ENCODE measurements at regions of chr12 and their contacts with region 1.

Region 1: GRCh38 chr12:56117778-56118687 is at the start of gene ZC3H10:
- DNase-seq: peak; percentile 99
- ATAC-seq: peak; percentile 77
- H3K4me3 Mint-ChIP-seq: peak within 1 kb of the TSS; percentile 97
- H3K27ac Mint-ChIP-seq: peak within 1 kb of the TSS; percentile 100
- H3K4me1 Mint-ChIP-seq: peaks cover 24% of the 10 kb centered on the region
- H3K27me3 Mint-ChIP-seq: no peaks in the 10 kb centered on the region
- total RNA-seq, gene ZC3H10: 6.4 to 6.5 TPM

Region 2: DNA sequence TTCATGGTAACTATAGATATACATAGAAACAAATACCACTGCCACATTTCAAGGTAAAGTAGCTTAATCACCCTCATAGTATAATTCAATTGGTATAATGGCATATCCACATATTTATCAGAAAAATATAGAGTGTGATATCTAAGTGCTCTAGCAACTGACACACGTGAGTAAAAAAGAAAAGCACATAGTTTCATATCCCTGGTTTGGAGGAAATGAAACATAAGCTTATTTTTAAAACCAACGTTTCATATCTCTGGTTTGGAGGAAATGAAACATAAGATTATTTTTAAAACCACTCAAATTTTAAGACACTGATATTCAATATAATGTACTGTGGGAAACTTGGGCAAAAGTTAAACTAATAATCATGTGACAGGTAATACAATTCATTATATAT is 650.2 kb before region 1 on chr12:
- CTCF ChIA-PET with region 1: no interaction called
- POLR2A ChIA-PET with region 1: no interaction called
- intact Hi-C with region 1: no loop called
- DNase-seq: no peak
- ATAC-seq: no peak
- H3K4me3 Mint-ChIP-seq: no peak overlapping the region
- H3K27ac Mint-ChIP-seq: no peak overlapping the region
- H3K4me1 Mint-ChIP-seq: no peaks in the 10 kb centered on the region
- H3K27me3 Mint-ChIP-seq: peaks cover 13% of the 10 kb centered on the region

Region 3: DNA sequence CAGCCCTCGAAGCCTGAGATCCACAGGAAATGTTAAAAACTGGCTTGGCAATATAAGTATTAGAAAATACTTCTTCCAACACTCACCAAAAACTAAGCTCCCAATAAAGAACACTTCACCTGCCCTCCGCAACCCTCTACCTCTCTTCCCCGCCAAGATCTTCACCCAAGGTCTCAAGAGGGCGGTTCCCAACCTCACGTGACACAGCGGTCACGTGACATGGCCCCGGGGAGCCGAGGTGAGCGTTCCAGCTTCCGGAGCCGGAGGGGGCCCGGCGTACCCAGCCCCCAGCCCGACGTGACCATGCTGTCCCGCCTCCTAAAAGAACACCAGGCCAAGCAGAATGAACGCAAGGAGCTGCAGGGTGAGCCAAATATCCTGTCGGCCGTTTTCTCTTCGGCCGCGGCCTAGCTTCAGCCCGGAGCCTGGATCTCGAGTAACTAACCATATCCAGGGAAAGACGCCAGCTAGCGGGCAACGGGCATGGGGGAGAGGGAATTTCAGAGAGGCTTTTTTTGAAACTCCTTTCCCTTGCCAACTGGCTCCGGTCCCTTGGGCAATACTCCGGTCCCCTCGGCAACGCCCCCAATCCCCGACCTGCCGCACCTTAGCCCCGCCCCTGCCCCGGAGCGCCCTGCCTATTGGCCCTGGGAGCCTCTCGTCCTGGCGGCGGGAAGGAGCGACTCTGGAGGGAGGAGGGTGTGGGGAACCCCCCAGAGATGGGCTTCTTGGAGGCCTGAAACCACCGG is 402.0 kb before region 1 on chr12 and contains the start of gene BLOC1S1:
- CTCF ChIA-PET with region 1: no interaction called
- POLR2A ChIA-PET with region 1: no interaction called
- intact Hi-C with region 1: loop called in 1 of 2 experiments (anchors 1 kb)
- DNase-seq: peak; percentile 97
- ATAC-seq: peak; percentile 94
- H3K4me3 Mint-ChIP-seq: peak within 1 kb of the TSS; percentile 86
- H3K27ac Mint-ChIP-seq: peak within 1 kb of the TSS; percentile 89
- H3K4me1 Mint-ChIP-seq: peaks cover 30% of the 10 kb centered on the region
- H3K27me3 Mint-ChIP-seq: peaks cover 2% of the 10 kb centered on the region
- total RNA-seq, gene BLOC1S1: 107 to 115 TPM

Region 4: DNA sequence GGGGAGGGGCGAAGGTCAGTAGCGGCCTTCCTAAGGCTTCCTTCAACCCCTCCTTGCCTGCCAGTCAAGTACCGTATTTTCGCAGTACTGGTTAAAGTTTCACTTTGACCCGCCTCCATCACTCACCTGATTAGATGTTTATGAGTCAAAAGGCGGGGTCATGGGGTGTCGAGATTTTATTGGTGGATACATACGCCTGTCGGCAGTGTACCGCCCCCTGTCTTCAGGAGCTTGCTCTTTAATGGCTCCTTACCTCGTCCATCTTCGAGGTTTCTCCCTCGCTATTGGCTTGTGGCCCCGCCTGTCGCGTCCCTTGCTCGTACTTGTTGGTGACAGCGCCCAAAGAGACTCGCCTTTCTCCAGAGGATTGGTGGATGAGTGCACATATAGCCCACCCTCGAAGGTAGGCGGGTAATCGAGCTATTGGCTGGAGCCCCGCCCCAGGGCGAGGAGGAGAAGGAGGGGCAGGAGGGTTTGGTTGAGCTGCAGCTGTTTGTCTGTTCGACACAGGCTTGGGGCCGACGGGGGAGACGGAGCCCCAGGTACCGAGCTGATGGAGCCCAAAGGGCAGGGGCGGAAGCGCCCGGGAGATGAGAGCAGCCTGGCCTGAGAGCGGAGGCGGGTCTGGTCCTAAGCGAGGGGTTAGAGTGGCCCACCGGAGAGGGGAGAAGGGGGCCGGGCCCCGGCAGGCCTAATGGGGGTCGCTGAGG is 144.3 kb before region 1 on chr12 and contains the start of gene RAB5B:
- CTCF ChIA-PET with region 1: interaction called, 5 read pairs
- POLR2A ChIA-PET with region 1: interaction called, 14 read pairs
- intact Hi-C with region 1: loop called in 1 of 2 experiments (anchors 1 kb)
- DNase-seq: peak; percentile 98
- ATAC-seq: peak; percentile 93
- H3K4me3 Mint-ChIP-seq: no peak within 1 kb of the TSS
- H3K27ac Mint-ChIP-seq: no peak within 1 kb of the TSS
- H3K4me1 Mint-ChIP-seq: peaks cover 28% of the 10 kb centered on the region
- H3K27me3 Mint-ChIP-seq: no peaks in the 10 kb centered on the region
- total RNA-seq, gene RAB5B: 33.2 to 35.1 TPM

Region 5: GRCh38 chr12:56152318-56153033 is 34.4 kb after region 1 on chr12 and contains the start of gene MYL6B:
- CTCF ChIA-PET with region 1: interaction called, 12 read pairs
- POLR2A ChIA-PET with region 1: interaction called, 5 read pairs
- intact Hi-C with region 1: loop called in 1 of 2 experiments (anchors 1 kb)
- DNase-seq: peak; percentile 98
- ATAC-seq: peak; percentile 92
- H3K4me3 Mint-ChIP-seq: peak within 1 kb of the TSS; percentile 88
- H3K27ac Mint-ChIP-seq: peak within 1 kb of the TSS; percentile 99
- H3K4me1 Mint-ChIP-seq: peaks cover 29% of the 10 kb centered on the region
- H3K27me3 Mint-ChIP-seq: no peaks in the 10 kb centered on the region
- total RNA-seq, gene MYL6B: 76.3 to 79.3 TPM

Region 6: DNA sequence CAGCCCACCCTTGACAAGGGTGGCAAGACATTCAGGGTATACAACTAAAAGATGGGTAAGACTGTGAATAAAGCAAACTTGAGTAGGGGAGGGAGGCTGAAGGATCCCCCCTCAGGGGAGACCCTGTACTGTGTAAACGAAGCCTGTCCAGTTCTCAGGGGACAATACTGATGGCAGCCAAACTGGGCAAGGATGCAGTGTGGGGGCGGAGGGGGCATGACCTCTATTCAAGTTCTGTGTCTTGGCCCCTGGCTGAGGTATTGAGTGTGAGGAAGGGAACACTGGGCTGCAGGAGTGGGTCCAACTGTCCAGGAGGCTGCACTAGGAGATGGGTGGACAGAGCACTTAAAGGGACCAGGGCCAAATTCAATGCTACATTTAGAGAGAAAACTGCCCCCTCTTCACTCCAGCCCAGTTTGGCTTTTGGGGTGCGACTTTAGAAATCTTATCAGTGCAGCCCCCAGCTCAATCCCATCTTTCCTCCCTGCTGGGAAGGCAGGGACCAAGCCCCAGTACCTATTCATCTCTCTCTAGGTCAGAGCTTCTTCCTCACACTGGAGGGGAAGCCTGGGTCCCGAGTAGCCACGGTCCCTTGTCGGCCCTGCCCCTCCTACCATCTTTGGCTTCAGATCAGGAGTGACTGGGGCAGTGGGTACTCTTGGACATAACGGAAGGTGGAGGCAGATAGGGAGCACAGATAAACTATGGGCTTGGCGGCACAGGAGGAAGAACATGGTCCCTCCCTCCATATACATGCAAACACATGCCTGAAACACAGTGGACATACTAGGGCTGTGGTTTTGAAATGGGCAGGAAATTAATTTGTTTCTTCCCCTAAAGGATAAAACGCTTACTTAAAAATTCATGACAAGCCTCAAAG is 123.6 kb after region 1 on chr12:
- CTCF ChIA-PET with region 1: no interaction called
- POLR2A ChIA-PET with region 1: no interaction called
- intact Hi-C with region 1: no loop called
- DNase-seq: no peak
- ATAC-seq: no peak
- H3K4me3 Mint-ChIP-seq: no peak overlapping the region
- H3K27ac Mint-ChIP-seq: peak overlapping the region; percentile 4
- H3K4me1 Mint-ChIP-seq: no peaks in the 10 kb centered on the region
- H3K27me3 Mint-ChIP-seq: no peaks in the 10 kb centered on the region

Region 7: GRCh38 chr12:56266693-56267442 is 148.8 kb after region 1 on chr12 and contains the start of gene COQ10A:
- CTCF ChIA-PET with region 1: interaction called, 6 read pairs
- POLR2A ChIA-PET with region 1: no interaction called
- intact Hi-C with region 1: loop called in 1 of 2 experiments (anchors 2 kb)
- DNase-seq: peak; percentile 90
- ATAC-seq: peak; percentile 90
- H3K4me3 Mint-ChIP-seq: peak within 1 kb of the TSS; percentile 89
- H3K27ac Mint-ChIP-seq: peak within 1 kb of the TSS; percentile 89
- H3K4me1 Mint-ChIP-seq: peaks cover 9% of the 10 kb centered on the region
- H3K27me3 Mint-ChIP-seq: no peaks in the 10 kb centered on the region
- total RNA-seq, gene COQ10A: 5.2 to 7.5 TPM

Region 8: DNA sequence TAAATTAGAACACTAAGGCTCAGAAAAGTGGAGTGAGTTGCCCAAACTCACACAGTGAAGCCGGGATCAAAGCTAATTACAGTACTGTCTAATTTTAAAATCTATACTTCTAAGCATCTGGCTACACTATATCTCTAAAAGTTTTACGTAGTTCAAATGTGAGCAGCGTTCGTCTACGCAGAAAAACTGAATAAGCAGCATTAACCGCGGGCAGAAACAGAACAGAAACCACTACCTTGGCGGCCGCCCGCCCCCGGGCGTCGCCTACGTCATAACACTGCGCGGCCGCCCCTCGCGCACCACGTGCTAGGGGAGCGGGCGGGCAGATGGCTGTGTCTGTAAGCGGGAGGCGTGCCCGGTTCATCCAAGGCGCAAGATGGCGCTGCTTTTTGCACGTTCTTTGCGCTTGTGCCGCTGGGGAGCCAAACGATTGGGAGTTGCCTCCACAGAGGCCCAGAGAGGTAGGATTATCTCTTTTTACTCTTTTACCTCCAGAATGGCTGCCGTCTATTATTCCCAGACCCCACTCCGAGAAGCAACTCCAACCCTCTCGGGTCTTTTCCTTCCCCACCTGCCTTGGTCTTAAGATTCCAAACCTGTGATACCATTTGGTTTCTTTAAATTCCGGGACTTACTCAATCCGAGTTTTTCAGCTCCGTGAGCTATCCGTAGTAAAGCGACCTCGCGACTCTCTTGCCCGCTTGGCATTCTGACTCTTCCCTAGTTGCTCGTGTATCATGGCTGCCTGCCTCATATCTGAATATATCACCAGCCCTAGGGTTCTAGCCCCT is 350.4 kb after region 1 on chr12 and contains the start of gene SPRYD4:
- CTCF ChIA-PET with region 1: interaction called, 5 read pairs
- POLR2A ChIA-PET with region 1: no interaction called
- intact Hi-C with region 1: loop called in 1 of 2 experiments (anchors 1 kb)
- DNase-seq: peak; percentile 96
- ATAC-seq: peak; percentile 90
- H3K4me3 Mint-ChIP-seq: peak within 1 kb of the TSS; percentile 91
- H3K27ac Mint-ChIP-seq: peak within 1 kb of the TSS; percentile 99
- H3K4me1 Mint-ChIP-seq: peaks cover 40% of the 10 kb centered on the region
- H3K27me3 Mint-ChIP-seq: no peaks in the 10 kb centered on the region
- total RNA-seq, gene SPRYD4: 3.1 TPM

Region 9: DNA sequence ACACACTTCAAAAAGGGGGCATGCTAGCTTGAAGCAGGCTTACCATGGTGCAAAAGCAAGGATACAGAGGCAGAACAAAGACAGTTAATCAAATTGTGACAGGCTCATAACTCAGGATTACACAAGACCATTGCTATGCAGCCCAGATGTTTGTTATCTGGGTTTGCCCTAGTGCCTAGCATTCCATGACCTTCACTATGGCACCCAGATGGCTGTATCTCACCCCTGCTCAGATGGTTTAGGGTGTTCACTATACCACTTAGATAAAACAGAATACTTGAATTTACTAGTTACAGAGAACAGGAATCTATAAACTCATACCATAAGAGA is 759.9 kb after region 1 on chr12:
- CTCF ChIA-PET with region 1: no interaction called
- POLR2A ChIA-PET with region 1: no interaction called
- intact Hi-C with region 1: no loop called
- DNase-seq: no peak
- ATAC-seq: no peak
- H3K4me3 Mint-ChIP-seq: no peak overlapping the region
- H3K27ac Mint-ChIP-seq: no peak overlapping the region
- H3K4me1 Mint-ChIP-seq: no peaks in the 10 kb centered on the region
- H3K27me3 Mint-ChIP-seq: peaks cover 5% of the 10 kb centered on the region

Region 10: GRCh38 chr12:57744777-57745484 is 1626.9 kb after region 1 on chr12 and contains the start of gene TSPAN31:
- CTCF ChIA-PET with region 1: no interaction called
- POLR2A ChIA-PET with region 1: no interaction called
- intact Hi-C with region 1: loop called in 1 of 2 experiments (anchors 2 kb)
- DNase-seq: peak; percentile 98
- ATAC-seq: peak; percentile 82
- H3K4me3 Mint-ChIP-seq: peak within 1 kb of the TSS; percentile 94
- H3K27ac Mint-ChIP-seq: peak within 1 kb of the TSS; percentile 98
- H3K4me1 Mint-ChIP-seq: peaks cover 47% of the 10 kb centered on the region
- H3K27me3 Mint-ChIP-seq: no peaks in the 10 kb centered on the region
- total RNA-seq, gene TSPAN31: 13.6 to 15.9 TPM